ENCODE measurements at regions of chr10 and their contacts with region 1.

Region 1: GRCh38 chr10:103712570-103713498 is 142.5 kb downstream of the SH3PXD2A start:
- DNase-seq: peak; percentile 73
- H3K4me3 Mint-ChIP-seq: no peak overlapping the region
- H3K27ac Mint-ChIP-seq: no peak overlapping the region
- H3K4me1 Mint-ChIP-seq: peaks cover 10% of the 10 kb centered on the region
- H3K27me3 Mint-ChIP-seq: peaks cover 5% of the 10 kb centered on the region

Region 2: DNA sequence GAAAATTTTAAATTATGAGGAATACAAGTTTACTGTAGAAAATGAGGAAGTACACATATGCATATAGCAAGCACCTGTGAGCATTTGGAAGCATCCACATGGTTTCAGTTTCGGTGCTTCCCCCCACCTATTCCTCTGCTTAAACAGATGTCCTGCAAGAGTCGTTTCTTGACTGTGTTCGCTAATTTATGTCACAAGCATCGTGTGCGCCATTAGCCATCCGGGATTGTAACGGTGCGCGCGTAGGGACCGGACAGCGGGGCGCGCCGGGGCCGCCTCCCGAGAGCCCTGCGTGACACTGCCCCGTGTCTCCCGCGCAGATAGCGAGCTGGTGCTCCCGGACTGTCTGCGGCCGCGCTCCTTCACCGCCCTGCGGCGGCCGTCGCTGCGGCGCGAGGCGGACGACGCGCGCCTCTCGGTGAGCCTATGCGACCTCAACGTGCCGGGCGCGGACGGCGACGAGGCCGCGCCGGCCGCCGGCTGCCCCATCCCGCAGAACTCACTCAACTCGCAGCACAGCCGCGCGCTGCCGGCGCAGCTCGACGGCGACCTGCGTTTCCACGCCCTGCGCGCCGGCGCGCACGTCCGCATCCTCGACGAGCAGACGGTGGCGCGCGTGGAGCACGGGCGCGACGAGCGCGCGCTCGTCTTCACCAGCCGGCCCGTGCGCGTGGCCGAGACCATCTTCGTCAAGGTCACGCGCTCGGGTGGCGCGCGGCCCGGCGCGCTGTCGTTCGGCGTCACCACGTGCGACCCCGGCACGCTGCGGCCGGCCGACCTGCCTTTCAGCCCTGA is 128.4 kb before region 1 on chr10:
- intact Hi-C with region 1: no loop called
- DNase-seq: peak; percentile 52
- H3K4me3 Mint-ChIP-seq: peak overlapping the region; percentile 87
- H3K27ac Mint-ChIP-seq: peak overlapping the region; percentile 83
- H3K4me1 Mint-ChIP-seq: peaks cover 13% of the 10 kb centered on the region
- H3K27me3 Mint-ChIP-seq: peaks cover 8% of the 10 kb centered on the region

Region 3: GRCh38 chr10:103772096-103772845 is 59.4 kb after region 1 on chr10:
- intact Hi-C with region 1: loop called (anchors 5 kb)
- DNase-seq: peak; percentile 60
- H3K4me3 Mint-ChIP-seq: peak overlapping the region; percentile 87
- H3K27ac Mint-ChIP-seq: peak overlapping the region; percentile 83
- H3K4me1 Mint-ChIP-seq: peaks cover 34% of the 10 kb centered on the region
- H3K27me3 Mint-ChIP-seq: peaks cover 6% of the 10 kb centered on the region

Region 4: DNA sequence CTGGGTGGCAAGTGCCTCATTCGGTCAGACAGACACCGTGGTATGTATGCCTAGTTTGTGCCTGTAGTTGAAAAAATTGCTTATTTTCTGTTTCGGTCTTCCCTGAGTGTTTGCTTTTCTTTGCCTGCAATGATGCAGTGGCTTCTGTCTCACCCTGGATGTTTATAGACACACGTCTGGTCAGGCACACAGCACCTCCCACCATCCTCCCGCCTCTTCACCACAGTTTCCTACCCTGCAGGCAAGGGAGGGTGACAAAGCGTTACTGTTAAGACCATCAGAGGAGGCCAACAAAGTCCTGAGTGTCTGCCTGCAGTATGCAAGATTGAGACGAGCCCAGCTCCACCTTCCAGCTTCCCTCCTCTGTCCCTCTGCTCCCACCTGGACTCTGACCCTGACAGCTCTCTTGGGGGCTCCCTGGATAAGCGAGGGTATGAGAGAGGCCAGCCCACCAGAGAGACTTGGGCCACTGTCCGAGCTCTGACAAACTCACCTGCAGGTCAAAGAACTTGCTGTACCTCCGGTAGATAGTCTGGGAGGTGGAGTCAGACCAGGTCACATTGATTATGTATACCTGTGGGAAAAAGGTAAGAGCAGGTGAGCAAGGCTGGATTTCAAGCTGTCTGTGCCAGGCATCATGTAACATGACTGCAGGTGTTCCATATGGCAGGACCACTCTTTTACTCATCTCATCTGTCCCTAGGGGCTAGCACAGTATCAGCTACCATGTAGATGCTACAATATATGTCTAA is 88.1 kb after region 1 on chr10:
- intact Hi-C with region 1: loop called (anchors 5 kb)
- DNase-seq: peak; percentile 64
- H3K4me3 Mint-ChIP-seq: peak overlapping the region; percentile 65
- H3K27ac Mint-ChIP-seq: peak overlapping the region; percentile 80
- H3K4me1 Mint-ChIP-seq: peaks cover 31% of the 10 kb centered on the region
- H3K27me3 Mint-ChIP-seq: peaks cover 3% of the 10 kb centered on the region

Region 5: DNA sequence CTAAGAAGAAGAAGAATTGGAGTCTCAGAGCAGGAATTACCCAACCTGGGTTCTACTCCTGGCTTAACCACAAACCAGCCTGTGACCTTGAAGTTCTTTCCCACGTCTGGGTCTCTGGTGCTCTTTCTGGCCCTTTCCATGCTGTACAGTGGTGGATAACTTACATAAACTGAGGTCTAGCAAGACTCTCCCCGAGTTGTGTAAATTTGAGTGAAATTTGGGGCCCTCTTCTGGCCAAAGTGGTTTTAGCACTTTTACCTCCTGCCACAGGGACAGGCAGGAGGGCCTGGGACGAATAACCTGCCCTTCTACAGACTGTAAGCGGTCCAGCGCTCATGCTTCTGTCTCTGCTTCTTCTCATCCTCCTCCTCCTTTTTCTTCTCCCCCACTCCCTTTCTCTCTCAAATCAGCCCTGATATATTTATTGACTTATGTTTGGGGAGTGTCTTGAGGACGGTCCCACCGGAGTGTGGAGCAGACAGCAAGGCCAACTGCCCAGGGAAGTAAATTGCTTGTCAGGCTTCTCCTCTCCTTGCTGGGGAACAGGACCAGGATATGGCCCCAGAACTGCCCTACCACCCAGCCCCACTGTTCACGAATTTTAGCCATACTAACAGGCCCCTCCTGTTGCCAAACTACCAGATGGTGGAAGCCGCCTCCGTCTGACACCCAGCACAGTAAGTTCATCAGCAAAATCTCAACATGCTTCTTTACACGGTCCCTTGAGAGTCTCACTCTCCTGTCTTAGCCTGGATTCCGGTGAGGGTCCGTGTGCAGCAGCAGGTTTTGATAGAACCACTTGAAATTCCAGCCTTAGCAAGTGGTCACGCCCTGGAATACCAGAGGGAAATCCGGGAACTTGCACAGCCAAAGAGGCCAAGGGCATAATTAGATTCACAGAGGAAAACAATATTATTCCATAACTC is 146.6 kb after region 1 on chr10:
- intact Hi-C with region 1: loop called (anchors 1 kb)
- DNase-seq: peak; percentile 40
- H3K4me3 Mint-ChIP-seq: peak overlapping the region; percentile 2
- H3K27ac Mint-ChIP-seq: no peak overlapping the region
- H3K4me1 Mint-ChIP-seq: peaks cover 19% of the 10 kb centered on the region
- H3K27me3 Mint-ChIP-seq: peaks cover 39% of the 10 kb centered on the region

Region 6: GRCh38 chr10:104002911-104003310 is 290.1 kb after region 1 on chr10:
- intact Hi-C with region 1: loop called (anchors 10 kb)
- DNase-seq: no peak
- H3K4me3 Mint-ChIP-seq: no peak overlapping the region
- H3K27ac Mint-ChIP-seq: no peak overlapping the region
- H3K4me1 Mint-ChIP-seq: no peaks in the 10 kb centered on the region
- H3K27me3 Mint-ChIP-seq: no peaks in the 10 kb centered on the region

Region 7: DNA sequence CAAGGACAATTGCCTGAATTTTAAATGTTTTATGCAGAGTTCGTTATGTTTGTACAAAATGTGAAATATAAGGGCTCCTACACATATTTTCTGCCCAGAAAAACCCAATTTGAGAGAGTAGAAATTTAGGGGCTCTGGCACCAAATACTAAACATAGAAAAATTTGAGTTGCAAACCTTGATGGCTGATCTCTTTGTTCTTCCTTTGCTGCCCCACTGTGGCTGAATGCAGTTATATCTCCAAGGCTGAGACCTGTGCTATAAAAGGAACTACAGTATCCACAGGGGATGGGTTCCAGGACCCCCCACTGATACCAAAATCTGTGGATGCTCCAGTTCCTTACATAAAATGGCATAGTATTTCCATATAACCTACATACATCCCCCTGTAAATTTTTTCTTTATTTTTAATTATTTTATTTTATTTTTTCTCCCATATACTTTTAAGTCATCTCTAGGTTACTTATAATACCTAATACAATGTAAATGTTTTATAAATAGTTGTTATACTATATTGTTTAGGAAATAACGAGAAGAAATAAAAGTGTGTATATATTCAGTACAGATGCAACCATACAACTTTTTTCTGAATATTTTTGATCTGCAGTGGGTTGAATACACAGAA is 496.9 kb after region 1 on chr10:
- intact Hi-C with region 1: loop called (anchors 2 kb)
- DNase-seq: no peak
- H3K4me3 Mint-ChIP-seq: no peak overlapping the region
- H3K27ac Mint-ChIP-seq: no peak overlapping the region
- H3K4me1 Mint-ChIP-seq: no peaks in the 10 kb centered on the region
- H3K27me3 Mint-ChIP-seq: peaks cover 29% of the 10 kb centered on the region

Measured in activated T-helper 1 cell treated with anti-CD3 and anti-CD28 coated beads, Interleukin-12 subunit alpha, Interleukin-12 subunit beta, Interleukin-2, Interleukin-4 antibody, amounts not matched to agents 30 ng/mL and 10 ng/mL and 1 ng/mL, durations not matched to agents 14 hours and 24 hours and 36 hours (primary cell).